ENCODE measurements at regions of chrX and their contacts with region 1.

Region 1: DNA sequence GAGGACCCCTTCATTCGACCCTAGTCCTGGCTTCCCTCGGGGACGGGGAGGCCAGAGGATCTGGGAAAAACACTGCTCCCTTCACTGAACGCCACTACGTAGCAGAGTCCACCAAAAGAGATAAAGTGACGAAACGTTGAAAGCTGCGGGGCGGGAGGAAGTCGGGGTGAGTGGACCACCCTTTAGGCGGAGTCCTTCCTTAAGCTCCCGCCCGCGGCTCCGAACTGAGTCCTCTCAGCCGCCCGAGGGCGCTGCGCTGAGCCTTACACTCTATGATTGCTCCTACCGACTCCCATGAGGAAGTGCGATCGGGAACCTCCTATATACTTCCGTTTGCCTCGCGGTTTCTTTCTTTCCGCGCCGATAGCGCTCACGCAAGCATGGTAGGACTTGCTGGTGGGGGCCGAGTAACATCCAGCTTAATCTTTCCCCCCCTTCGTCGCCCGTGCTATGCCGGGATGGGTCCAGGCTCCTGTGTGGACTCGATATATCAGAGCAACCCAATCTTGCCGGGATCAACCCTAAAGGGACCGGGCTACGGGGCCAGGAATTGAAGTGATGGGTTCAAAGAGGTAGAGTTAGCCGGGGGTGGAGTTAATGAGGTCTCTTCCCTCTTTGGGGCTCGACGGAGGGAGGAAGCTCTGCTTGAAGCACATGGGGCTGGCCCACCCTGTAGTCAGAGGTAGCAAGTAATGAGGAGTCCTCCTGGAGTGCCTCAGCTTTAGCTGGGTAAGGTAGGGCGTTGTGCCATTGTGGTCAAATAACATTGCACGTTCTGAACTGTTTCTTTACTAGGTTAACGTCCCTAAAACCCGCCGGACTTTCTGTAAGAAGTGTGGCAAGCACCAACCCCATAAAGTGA is at the start of gene RPL36A:
- DNase-seq: peak; percentile 63 to 85 (median 75)
- H3K4me3 ChIP-seq: peak within 1 kb of the TSS; percentile 65
- H3K4me3 Mint-ChIP-seq: peak within 1 kb of the TSS; percentile 93 to 100 (median 96)
- H3K27ac ChIP-seq: peak within 1 kb of the TSS; percentile 65
- H3K27ac Mint-ChIP-seq: peak within 1 kb of the TSS; percentile 91 to 99 (median 97)
- H3K4me1 ChIP-seq: peaks cover 9% of the 10 kb centered on the region
- H3K4me1 Mint-ChIP-seq: peaks cover 24 to 42% (median 29%) of the 10 kb centered on the region in 3 donors
- H3K27me3 ChIP-seq: no peaks in the 10 kb centered on the region
- H3K27me3 Mint-ChIP-seq: peaks cover 0 to 1% of the 10 kb centered on the region in 2 donors
- total RNA-seq, gene RPL36A: 332 to 416 TPM

Region 2: DNA sequence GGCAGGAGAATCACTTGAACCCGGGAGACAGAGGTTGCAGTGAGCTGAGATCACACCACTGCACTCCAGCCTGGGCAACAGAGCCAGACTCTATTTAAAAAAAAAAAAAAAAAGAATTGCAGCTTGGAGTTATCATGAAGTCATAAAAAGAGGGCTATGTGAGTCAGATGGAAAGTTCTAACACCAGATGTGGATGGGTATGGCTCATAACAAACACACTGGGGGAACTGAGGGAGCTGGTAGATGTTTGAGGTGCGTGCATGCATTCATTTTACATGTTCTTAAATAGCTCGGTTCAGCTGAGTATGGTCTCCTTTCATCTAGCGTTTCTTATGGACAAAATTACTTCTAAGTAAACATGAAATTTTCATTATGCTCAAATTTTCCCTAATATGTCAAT is 350.7 kb before region 1 on chrX:
- CTCF ChIA-PET with region 1: no interaction called
- POLR2A ChIA-PET with region 1: interaction called, 13 read pairs
- DNase-seq: no peak
- H3K4me3 ChIP-seq: no peak overlapping the region
- H3K4me3 Mint-ChIP-seq: no peak overlapping the region
- H3K27ac ChIP-seq: no peak overlapping the region
- H3K27ac Mint-ChIP-seq: no peak overlapping the region
- H3K4me1 ChIP-seq: no peaks in the 10 kb centered on the region
- H3K4me1 Mint-ChIP-seq: peaks cover 0 to 22% (median 5%) of the 10 kb centered on the region in 3 donors
- H3K27me3 ChIP-seq: no peaks in the 10 kb centered on the region
- H3K27me3 Mint-ChIP-seq: no peaks in the 10 kb centered on the region

Region 3: GRCh38 chrX:101348452-101349192 is 42.3 kb before region 1 on chrX and contains the start of gene TIMM8A:
- CTCF ChIA-PET with region 1: interaction called, 12 read pairs
- POLR2A ChIA-PET with region 1: interaction called, 8 read pairs
- DNase-seq: peak; percentile 64 to 81 (median 71)
- H3K4me3 ChIP-seq: peak within 1 kb of the TSS; percentile 88
- H3K4me3 Mint-ChIP-seq: peak within 1 kb of the TSS; percentile 88 to 97 (median 92)
- H3K27ac ChIP-seq: peak within 1 kb of the TSS; percentile 74
- H3K27ac Mint-ChIP-seq: peak within 1 kb of the TSS; percentile 87 to 96 (median 91)
- H3K4me1 ChIP-seq: no peaks in the 10 kb centered on the region
- H3K4me1 Mint-ChIP-seq: peaks cover 14 to 22% (median 15%) of the 10 kb centered on the region in 3 donors
- H3K27me3 ChIP-seq: no peaks in the 10 kb centered on the region
- H3K27me3 Mint-ChIP-seq: peaks cover 0 to 6% of the 10 kb centered on the region in 2 donors
- total RNA-seq, gene TIMM8A: 40.1 to 43.3 TPM

Region 4: GRCh38 chrX:101415180-101416145 is 24.6 kb after region 1 on chrX:
- CTCF ChIA-PET with region 1: interaction called, 25 read pairs
- POLR2A ChIA-PET with region 1: interaction called, 6 read pairs
- DNase-seq: peak in 3 of 5 donors; percentile 49 to 61 (median 58)
- H3K4me3 ChIP-seq: no peak overlapping the region
- H3K4me3 Mint-ChIP-seq: peak overlapping the region in 5 of 7 donors; percentile 55 to 89 (median 70)
- H3K27ac ChIP-seq: peak overlapping the region; percentile 9
- H3K27ac Mint-ChIP-seq: peak overlapping the region; percentile 70 to 91 (median 86)
- H3K4me1 ChIP-seq: peaks cover 9% of the 10 kb centered on the region
- H3K4me1 Mint-ChIP-seq: peaks cover 39 to 72% (median 51%) of the 10 kb centered on the region in 3 donors
- H3K27me3 ChIP-seq: no peaks in the 10 kb centered on the region
- H3K27me3 Mint-ChIP-seq: peaks cover 0 to 4% of the 10 kb centered on the region in 2 donors

Region 5: DNA sequence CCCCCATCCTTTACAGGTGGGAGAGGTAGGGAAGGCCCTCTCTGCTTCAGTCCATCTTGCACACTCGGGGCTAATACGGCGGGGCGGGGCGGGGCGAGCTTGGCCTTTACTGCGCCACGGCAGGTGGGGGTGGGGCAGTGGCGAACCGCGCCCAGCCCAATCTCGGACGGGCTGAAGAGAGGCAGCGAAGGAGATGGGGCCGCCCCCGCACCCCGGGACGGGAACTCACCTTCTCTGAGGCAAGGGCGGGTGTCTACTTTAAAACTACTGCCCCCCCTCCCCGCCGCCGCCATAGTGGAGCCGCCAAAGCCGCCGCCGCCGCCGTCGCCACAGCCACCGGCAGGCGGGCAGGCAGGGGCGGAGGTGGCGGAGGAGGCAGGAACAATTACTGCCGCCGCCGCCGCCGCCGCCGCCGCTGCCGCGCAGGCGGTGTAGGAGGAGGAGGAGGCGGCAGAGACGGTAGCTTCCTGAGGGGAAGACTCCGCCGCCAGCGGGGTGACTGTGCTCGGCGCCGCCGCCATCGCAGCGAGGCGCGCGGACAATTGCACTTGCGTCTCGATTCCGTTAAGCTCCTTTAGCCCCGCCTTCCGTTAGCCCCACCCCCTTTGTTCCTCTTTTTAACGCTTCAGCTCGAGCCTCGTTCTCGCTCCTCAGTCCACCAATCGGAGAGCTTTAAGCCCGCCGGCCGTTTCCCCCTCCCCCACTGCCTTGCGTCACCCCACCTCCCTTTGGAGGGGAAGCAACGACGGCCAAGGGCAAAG is 540.8 kb after region 1 on chrX and contains the start of gene ZMAT1:
- CTCF ChIA-PET with region 1: interaction called, 4 read pairs
- POLR2A ChIA-PET with region 1: interaction called, 13 read pairs
- DNase-seq: peak; percentile 79 to 94 (median 87)
- H3K4me3 ChIP-seq: peak within 1 kb of the TSS; percentile 35
- H3K4me3 Mint-ChIP-seq: peak within 1 kb of the TSS; percentile 82 to 94 (median 91)
- H3K27ac ChIP-seq: peak within 1 kb of the TSS; percentile 57
- H3K27ac Mint-ChIP-seq: peak within 1 kb of the TSS; percentile 92 to 98 (median 96)
- H3K4me1 ChIP-seq: no peaks in the 10 kb centered on the region
- H3K4me1 Mint-ChIP-seq: peaks cover 11 to 38% (median 23%) of the 10 kb centered on the region in 3 donors
- H3K27me3 ChIP-seq: no peaks in the 10 kb centered on the region
- H3K27me3 Mint-ChIP-seq: no peaks in the 10 kb centered on the region
- total RNA-seq, gene ZMAT1: 3.2 to 4.4 TPM

Measured in CD8-positive, alpha-beta memory T cell (primary cell).